ENCODE measurements at regions of chr16 and their contacts with region 1.

Region 1: DNA sequence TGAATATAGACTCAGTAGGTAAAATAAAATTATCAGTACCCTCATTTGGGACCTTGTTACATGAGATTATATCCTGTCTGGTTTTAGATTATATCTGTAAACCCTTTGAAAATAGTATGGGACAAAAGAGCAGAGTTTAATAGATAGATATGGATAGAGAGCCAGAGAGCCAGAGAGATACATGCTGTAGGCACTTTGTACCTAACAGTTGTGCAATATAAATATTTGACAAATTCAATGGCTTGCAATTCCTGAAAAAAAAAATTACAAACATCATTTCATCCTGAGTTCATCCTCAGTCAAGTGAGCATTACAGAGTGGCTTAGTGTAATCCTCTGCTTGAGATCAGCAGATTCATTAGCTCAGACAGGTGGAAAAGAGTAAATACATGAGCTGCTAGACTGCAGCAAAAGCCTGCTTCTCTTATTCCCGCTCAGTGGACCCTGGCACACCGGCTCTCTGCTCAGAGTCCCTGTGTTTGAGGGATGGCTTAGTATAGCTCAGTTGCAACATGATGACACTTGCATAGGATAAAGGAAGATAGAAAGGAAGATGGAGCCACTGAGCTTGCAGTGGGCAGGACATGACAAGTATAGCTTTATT is 931.6 kb upstream of the GOT2 start:
- DNase-seq: no peak
- H3K4me3 ChIP-seq: no peak overlapping the region
- H3K27ac ChIP-seq: no peak overlapping the region
- H3K4me1 ChIP-seq: no peaks in the 10 kb centered on the region
- H3K27me3 ChIP-seq: no peaks in the 10 kb centered on the region
- CTCF ChIP-seq: no peak

Region 2: GRCh38 chr16:59611556-59611955 is 54.2 kb before region 1 on chr16:
- CTCF ChIA-PET with region 1: no interaction called
- dilution Hi-C with region 1: no loop called
- in situ Hi-C with region 1: no loop called
- intact Hi-C with region 1: no loop called
- DNase-seq: peak; percentile 53
- H3K4me3 ChIP-seq: no peak overlapping the region
- H3K27ac ChIP-seq: no peak overlapping the region
- H3K4me1 ChIP-seq: no peaks in the 10 kb centered on the region
- H3K27me3 ChIP-seq: no peaks in the 10 kb centered on the region
- CTCF ChIP-seq: no peak

Region 3: GRCh38 chr16:59878479-59878878 is 212.8 kb after region 1 on chr16:
- CTCF ChIA-PET with region 1: interaction called, 10 read pairs
- dilution Hi-C with region 1: no loop called
- in situ Hi-C with region 1: no loop called
- intact Hi-C with region 1: no loop called
- DNase-seq: peak; percentile 89
- H3K4me3 ChIP-seq: no peak overlapping the region
- H3K27ac ChIP-seq: peak overlapping the region; percentile 70
- H3K4me1 ChIP-seq: peaks cover 27% of the 10 kb centered on the region
- H3K27me3 ChIP-seq: no peaks in the 10 kb centered on the region
- CTCF ChIP-seq: no peak

Region 4: GRCh38 chr16:59973966-59974365 is 308.2 kb after region 1 on chr16:
- CTCF ChIA-PET with region 1: no interaction called
- dilution Hi-C with region 1: no loop called
- in situ Hi-C with region 1: no loop called
- intact Hi-C with region 1: no loop called
- DNase-seq: peak; percentile 94
- H3K4me3 ChIP-seq: no peak overlapping the region
- H3K27ac ChIP-seq: peak overlapping the region; percentile 82
- H3K4me1 ChIP-seq: peaks cover 18% of the 10 kb centered on the region
- H3K27me3 ChIP-seq: no peaks in the 10 kb centered on the region
- CTCF ChIP-seq: no peak